MCF 10A (cell line): ENCODE measurements at regions of chr20 and their contacts with region 1.

Region 1: DNA sequence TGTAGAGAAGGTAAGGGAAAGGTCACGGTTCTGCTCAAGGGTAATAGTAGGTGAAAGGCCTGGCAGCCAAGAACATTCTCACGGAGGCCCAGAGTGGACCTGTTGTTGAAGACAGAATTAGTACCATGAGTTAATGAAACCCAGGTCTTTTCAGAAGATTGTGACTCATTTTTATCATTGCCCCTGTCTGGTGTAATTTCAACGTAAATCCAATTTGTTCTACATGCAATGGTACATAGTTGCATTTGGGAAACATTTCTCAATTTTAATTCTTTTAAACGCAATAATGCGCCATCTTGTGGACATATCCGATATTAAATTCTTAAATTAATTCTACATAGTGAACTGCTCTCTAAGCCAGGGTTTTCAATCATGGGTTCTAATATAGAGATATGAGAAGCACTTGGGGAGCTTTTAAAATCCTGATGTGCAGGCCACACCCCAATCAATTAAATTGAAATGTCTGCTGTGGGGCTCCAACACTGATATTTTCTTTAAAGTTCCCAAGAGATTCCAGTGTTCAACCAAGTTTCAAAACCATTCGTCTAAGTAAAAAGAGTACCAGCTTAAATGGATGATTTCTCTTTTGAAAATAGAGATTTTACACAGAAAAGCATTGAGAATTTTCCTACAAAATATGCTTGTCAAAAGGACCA is 257.4 kb downstream of the PLCB1 start:
- DNase-seq: peak; percentile 47
- H3K4me3 Mint-ChIP-seq: no peak overlapping the region
- H3K27ac Mint-ChIP-seq: no peak overlapping the region
- H3K4me1 Mint-ChIP-seq: peaks cover 12% of the 10 kb centered on the region
- H3K27me3 Mint-ChIP-seq: no peaks in the 10 kb centered on the region
- CTCF ChIP-seq: peak; percentile 35

Region 2: DNA sequence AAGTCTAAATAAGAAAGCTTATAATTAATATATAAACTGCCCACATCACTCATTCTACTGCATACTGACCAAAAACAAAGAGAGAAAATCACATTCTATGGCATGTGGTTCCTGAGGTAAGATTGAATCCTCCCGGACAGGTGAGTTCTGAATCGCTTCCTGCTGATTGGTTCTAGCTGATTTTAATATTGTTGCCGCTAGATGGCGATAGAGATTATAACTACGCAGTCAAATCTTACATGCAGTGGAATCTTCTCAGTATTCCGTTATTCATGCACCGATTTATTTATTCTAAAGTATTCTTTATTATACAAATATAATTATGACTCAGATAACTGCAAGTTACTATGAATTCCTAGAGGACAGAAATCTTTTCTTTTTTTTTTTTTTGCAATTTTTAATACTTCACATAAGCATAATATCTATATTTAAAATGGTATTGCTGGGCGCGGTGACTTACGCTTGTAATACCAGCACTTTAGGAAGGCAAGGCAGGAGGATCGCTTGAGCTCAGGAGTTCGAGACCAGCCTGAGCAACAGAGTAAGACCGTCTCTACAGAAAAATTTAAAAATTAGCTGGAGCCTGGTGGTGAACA is 345.7 kb before region 1 on chr20:
- CTCF ChIA-PET with region 1: interaction called, 80 read pairs
- POLR2A ChIA-PET with region 1: no interaction called
- intact Hi-C with region 1: loop called (anchors 1 kb)
- DNase-seq: peak; percentile 65
- H3K4me3 Mint-ChIP-seq: no peak overlapping the region
- H3K27ac Mint-ChIP-seq: no peak overlapping the region
- H3K4me1 Mint-ChIP-seq: no peaks in the 10 kb centered on the region
- H3K27me3 Mint-ChIP-seq: peaks cover 14% of the 10 kb centered on the region
- CTCF ChIP-seq: peak; percentile 65

Region 3: DNA sequence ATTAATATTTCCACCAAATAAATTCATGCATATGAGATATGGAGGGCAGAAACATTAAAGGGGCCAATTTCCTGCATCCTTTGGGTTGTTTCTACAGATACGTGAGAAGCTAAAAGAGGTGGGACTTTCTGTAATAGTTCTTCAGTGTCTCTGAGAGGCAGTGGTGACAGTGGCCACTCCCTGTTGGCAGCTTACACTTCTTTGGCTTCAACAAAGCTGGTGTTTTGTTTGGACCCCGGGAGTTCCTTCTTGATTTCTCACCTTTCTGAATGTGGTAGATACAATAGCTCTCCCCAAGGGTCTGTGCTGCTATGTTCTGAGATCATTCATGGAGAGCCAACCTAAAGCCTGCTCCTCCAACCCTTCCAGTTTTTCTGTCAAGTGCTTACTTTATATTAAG is 249.6 kb before region 1 on chr20:
- CTCF ChIA-PET with region 1: interaction called, 15 read pairs
- POLR2A ChIA-PET with region 1: interaction called, 3 read pairs
- intact Hi-C with region 1: no loop called
- DNase-seq: no peak
- H3K4me3 Mint-ChIP-seq: no peak overlapping the region
- H3K27ac Mint-ChIP-seq: no peak overlapping the region
- H3K4me1 Mint-ChIP-seq: peaks cover 8% of the 10 kb centered on the region
- H3K27me3 Mint-ChIP-seq: peaks cover 11% of the 10 kb centered on the region
- CTCF ChIP-seq: no peak

Region 4: GRCh38 chr20:8372824-8373380 is 16.6 kb before region 1 on chr20:
- CTCF ChIA-PET with region 1: interaction called, 18 read pairs
- POLR2A ChIA-PET with region 1: no interaction called
- intact Hi-C with region 1: no loop called
- DNase-seq: no peak
- H3K4me3 Mint-ChIP-seq: no peak overlapping the region
- H3K27ac Mint-ChIP-seq: no peak overlapping the region
- H3K4me1 Mint-ChIP-seq: no peaks in the 10 kb centered on the region
- H3K27me3 Mint-ChIP-seq: no peaks in the 10 kb centered on the region
- CTCF ChIP-seq: no peak

Region 5: DNA sequence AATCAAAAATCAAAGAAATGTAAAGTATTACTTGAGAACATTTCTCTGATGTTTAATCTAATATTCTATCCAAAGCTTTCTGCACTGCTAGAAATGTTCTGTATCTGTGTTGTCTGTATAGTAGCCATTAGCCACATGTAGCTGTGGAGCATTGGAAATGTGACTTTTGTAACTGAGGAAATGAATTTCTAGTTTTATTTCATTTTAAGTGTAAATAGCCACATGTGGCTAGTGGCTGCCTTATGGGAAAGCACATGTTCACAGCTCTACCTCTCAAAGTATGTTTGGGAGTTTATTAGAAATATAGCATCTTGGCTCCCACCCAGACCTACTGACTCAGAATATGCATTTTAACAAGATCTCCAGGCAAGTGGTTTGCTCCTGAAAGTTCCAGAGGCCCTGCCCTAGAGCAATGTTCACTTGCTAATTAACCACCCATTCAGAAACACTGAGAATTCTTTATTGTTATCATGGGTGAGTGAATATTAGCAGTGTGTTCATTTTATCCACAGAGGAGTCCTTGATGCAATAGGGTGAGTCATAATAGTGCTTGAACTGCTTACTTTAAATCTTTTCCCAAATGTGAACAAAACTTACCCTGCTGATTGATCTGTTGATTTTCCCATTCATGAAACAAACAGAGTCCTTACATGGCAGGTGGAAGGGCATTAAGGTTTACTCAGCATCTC is 25.2 kb after region 1 on chr20:
- CTCF ChIA-PET with region 1: interaction called, 11 read pairs
- POLR2A ChIA-PET with region 1: no interaction called
- intact Hi-C with region 1: no loop called
- DNase-seq: peak; percentile 82
- H3K4me3 Mint-ChIP-seq: no peak overlapping the region
- H3K27ac Mint-ChIP-seq: peak overlapping the region; percentile 65
- H3K4me1 Mint-ChIP-seq: peaks cover 30% of the 10 kb centered on the region
- H3K27me3 Mint-ChIP-seq: no peaks in the 10 kb centered on the region
- CTCF ChIP-seq: no peak

Region 6: GRCh38 chr20:8425016-8425415 is 35.5 kb after region 1 on chr20:
- CTCF ChIA-PET with region 1: no interaction called
- POLR2A ChIA-PET with region 1: no interaction called
- intact Hi-C with region 1: no loop called
- DNase-seq: no peak
- H3K4me3 Mint-ChIP-seq: no peak overlapping the region
- H3K27ac Mint-ChIP-seq: no peak overlapping the region
- H3K4me1 Mint-ChIP-seq: peaks cover 4% of the 10 kb centered on the region
- H3K27me3 Mint-ChIP-seq: no peaks in the 10 kb centered on the region
- CTCF ChIP-seq: no peak

Region 7: DNA sequence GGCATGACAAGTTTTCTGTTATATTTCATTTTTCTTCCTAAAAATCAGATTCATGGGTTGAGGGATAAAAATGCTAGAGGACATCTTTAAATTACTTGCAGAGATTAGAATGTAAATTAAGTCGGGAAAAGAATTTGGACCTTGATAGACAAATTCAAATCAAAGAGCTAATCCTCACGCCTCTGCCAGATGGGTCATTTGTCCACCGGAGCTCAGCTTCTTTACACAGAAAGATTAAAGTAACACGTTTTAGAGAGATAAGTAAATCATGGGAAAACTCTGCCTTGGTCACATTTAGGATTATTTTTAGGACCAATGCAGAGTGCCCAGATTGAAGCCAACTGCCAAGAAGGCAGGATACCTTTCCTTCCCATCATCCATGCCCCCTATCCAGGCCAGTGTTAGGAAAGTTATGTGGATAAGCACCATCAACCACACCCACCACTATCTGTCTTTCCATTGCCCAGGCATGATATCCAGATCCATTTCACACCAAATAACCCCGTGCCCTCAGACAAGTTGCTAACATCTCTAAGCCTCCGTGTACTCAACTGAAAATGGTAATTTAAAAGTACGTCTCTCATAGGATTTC is 282.0 kb after region 1 on chr20:
- CTCF ChIA-PET with region 1: no interaction called
- POLR2A ChIA-PET with region 1: no interaction called
- intact Hi-C with region 1: no loop called
- DNase-seq: no peak
- H3K4me3 Mint-ChIP-seq: no peak overlapping the region
- H3K27ac Mint-ChIP-seq: no peak overlapping the region
- H3K4me1 Mint-ChIP-seq: no peaks in the 10 kb centered on the region
- H3K27me3 Mint-ChIP-seq: no peaks in the 10 kb centered on the region
- CTCF ChIP-seq: no peak